Right ventricle myocardium inferior (tissue), 1 donor: ENCODE measurements at regions of chr4 and their contacts with region 1.

Region 1: DNA sequence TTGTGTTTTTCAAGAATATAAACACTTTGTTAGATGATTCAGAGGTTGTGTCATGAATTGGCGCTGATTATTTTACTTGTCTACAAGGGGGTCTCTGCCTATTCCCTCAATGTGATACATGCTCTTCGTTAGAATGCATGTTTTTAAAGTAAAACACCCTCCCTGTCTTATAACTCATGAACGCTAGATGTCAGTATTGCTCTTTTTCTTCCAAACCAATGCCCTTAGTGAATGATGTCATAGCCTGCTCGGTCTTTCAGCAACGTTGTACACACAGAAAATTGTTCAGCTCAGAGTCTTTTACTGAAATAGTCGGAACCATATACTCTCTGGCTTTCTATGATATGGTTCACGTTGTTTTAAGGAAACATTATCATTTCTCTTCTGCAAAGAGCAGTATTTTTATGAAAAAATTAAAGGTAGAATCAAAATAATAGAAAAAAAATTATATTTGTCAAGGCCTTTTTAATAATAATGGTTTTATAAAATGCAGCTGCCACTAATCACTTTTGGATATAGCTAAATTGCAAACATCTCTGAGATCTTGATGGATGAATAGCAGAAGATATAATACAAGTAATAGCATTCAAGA is 292.9 kb downstream of the TLL1 start:
- DNase-seq: no peak
- ATAC-seq: no peak

Region 2: DNA sequence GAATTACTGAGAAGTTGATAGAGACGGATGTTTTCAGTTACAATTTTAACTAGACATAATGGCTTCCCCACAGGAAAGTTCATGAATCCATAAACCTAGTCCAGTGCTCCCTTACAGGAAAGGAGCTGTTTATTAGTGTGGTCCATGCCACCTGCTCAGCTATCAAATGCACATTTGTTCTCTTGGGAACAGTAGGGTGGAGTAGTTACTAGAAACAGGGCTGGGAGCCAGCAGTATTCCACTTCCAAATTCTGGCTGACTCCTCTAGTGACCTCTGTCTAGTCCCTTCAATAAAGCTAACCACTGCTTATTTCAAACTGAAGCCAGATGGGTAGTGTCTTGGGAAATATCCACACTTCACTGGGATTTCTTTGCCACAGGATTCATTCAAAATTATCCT is 381.3 kb before region 1 on chr4:
- intact Hi-C with region 1: no loop called
- DNase-seq: no peak
- ATAC-seq: peak; percentile 87

Region 3: DNA sequence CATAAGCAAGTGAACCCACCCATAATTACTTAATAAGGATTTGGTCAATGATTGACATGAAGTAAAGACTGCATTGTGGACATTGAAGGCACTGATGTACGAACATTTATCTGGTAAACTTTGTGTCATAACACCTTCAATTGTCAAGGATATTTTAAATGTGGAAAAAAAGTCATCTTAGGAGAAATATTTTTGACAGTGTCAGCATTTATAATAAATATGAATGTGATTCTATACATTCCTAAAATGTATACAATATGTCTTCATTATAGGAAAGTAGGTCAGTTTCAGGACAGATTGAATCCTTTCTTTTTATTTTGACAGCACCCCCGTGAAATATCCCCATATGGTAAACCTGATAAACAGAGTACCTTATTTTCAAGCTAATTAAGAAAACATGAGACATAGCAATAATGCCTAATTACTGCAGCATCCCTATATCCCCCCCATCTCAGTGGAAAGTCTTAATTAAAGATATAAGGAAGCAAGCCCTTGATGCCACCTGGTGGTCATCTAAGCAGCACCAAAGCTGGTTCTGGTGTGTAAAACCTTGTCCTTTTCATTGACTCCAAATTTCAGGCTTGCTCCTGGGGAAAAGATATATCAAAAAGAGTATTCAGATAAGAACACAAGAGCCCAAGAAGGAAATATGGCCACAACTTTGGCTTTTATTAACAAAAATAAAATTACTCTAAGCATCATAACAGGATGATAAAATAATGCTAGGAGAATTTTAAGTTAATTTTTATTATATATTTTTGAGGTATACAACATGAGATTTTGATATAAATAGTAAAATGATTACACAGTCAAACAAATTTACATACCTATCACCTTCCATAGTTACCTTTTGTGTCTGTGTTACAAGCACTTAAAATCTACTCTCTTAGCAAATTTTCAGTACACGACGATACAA is 86.8 kb after region 1 on chr4:
- intact Hi-C with region 1: loop called (anchors 10 kb)
- DNase-seq: peak; percentile 17
- ATAC-seq: no peak